ENCODE measurements at regions of chr10 and their contacts with region 1.

Region 1: GRCh38 chr10:75019370-75019769 is 92.1 kb upstream of the SAMD8 start:
- DNase-seq: no peak
- H3K4me3 Mint-ChIP-seq: no peak overlapping the region
- H3K27ac Mint-ChIP-seq: no peak overlapping the region
- H3K4me1 Mint-ChIP-seq: peaks cover 26% of the 10 kb centered on the region
- H3K27me3 Mint-ChIP-seq: no peaks in the 10 kb centered on the region

Region 2: DNA sequence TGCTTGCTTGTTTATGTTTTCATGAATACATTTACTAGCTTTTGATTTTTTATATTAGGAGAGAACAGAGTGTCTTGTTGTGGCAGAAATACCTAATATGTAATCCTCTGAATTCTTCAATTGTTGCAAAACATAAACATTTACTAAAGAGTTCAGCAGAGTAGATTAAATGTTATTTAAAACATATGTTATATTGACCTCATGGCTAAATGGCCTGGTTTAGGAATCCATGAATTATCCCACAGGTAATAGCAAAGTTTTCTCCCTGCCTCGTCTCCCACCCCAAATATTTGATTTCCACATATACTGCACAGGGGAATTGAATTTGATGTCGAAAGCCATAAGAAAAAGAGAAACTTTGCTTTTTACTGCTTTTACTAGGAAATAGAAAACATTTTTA is 756.5 kb before region 1 on chr10:
- intact Hi-C with region 1: loop called (anchors 1 kb)
- DNase-seq: no peak
- H3K4me3 Mint-ChIP-seq: no peak overlapping the region
- H3K27ac Mint-ChIP-seq: no peak overlapping the region
- H3K4me1 Mint-ChIP-seq: peaks cover 13% of the 10 kb centered on the region
- H3K27me3 Mint-ChIP-seq: no peaks in the 10 kb centered on the region

Region 3: DNA sequence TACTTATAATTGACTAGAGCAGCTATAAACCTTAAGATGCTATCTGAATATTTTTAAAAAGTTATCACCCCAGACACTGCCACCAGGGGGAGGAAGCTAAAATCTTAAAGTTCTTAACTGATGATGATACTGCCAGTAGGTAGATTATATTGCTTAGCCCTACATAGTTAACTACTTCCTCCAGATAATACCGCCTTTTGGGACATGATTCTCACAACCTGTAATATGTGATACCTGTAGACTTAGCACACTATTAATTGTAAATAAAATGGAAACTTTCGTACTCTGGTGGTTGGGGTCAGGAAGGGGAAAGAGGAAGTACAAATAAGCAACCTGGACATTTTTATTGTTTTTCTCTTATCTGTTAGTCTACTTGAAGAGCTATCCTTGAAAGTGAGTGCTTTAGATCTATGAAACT is 599.4 kb before region 1 on chr10:
- intact Hi-C with region 1: loop called (anchors 1 kb)
- DNase-seq: no peak
- H3K4me3 Mint-ChIP-seq: no peak overlapping the region
- H3K27ac Mint-ChIP-seq: no peak overlapping the region
- H3K4me1 Mint-ChIP-seq: peaks cover 8% of the 10 kb centered on the region
- H3K27me3 Mint-ChIP-seq: no peaks in the 10 kb centered on the region

Region 4: DNA sequence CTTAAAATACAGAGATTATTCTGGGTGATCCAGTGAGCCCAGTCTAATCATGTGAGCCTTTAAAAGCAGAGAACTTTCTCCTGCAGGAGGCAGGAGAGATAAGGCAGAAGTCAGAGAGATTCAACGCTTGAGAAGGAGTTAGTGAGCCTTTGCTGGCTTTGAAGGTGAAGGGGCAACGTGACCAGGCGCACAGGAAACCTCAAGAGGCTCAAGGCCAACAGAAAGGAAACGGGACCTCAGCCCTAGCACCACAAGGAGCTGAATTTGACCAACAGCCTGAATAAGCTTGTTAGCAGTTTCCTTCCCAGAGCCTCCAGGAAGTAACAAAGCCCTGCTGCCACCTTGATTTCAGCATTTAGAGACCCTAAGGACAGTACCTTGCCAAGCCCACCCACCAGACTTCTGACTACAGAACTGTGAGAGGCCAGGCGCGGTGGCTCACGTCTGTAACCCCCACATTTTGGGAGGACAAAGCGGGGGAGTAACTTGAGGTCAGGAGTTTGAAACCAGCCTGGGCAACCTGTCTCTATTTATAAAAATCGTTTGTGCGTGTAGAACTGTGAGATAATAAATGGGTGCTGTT is 280.3 kb before region 1 on chr10:
- intact Hi-C with region 1: loop called (anchors 2 kb)
- DNase-seq: peak; percentile 28
- H3K4me3 Mint-ChIP-seq: no peak overlapping the region
- H3K27ac Mint-ChIP-seq: peak overlapping the region; percentile 85
- H3K4me1 Mint-ChIP-seq: peaks cover 21% of the 10 kb centered on the region
- H3K27me3 Mint-ChIP-seq: no peaks in the 10 kb centered on the region

Region 5: GRCh38 chr10:74977913-74978847 is 41.2 kb before region 1 on chr10:
- intact Hi-C with region 1: loop called (anchors 5 kb)
- DNase-seq: peak; percentile 60
- H3K4me3 Mint-ChIP-seq: peak overlapping the region; percentile 37
- H3K27ac Mint-ChIP-seq: peak overlapping the region; percentile 74
- H3K4me1 Mint-ChIP-seq: peaks cover 49% of the 10 kb centered on the region
- H3K27me3 Mint-ChIP-seq: no peaks in the 10 kb centered on the region

Measured in activated T-helper 2 cell treated with anti-CD3 and anti-CD28 coated beads, Interferon-gamma antibody, Interleukin-2, Interleukin-4, amounts not matched to agents 10 μg/mL and 5 μg/mL and 100 μg/mL, durations not matched to agents 14 hours and 24 hours and 36 hours (primary cell).